Activated naive CD4-positive, alpha-beta T cell treated with anti-CD3 and anti-CD28 coated beads for 36 hours (primary cell): ENCODE measurements at regions of chr21 and their contacts with region 1.

Region 1: GRCh38 chr21:45074818-45075595 is 627 bp downstream of the ADARB1 start:
- DNase-seq: peak; percentile 34
- H3K4me3 Mint-ChIP-seq: peak overlapping the region; percentile 84
- H3K27ac Mint-ChIP-seq: peak overlapping the region; percentile 76
- H3K4me1 Mint-ChIP-seq: peaks cover 45% of the 10 kb centered on the region
- H3K27me3 Mint-ChIP-seq: no peaks in the 10 kb centered on the region

Region 2: DNA sequence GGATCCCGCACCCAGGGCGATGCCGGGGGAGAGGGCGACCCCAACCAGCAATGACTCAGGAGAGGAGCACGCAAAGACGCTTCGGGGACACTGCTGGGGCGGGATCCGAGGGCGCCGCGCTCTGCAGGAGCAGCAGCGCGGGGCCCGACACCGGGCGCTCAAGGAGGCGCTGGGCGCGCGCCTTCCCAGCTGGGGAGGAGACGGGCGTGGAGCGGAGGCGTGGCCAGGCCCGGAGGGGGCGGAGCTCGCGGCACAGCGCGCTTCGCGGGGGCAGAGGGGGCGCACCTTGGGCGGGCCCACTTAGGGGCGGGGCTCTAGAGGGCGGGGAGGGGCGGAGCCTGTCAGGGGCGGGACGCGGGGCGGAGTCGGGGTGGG is 257.5 kb before region 1 on chr21:
- CTCF ChIA-PET with region 1: no interaction called
- intact Hi-C with region 1: loop called (anchors 5 kb)
- DNase-seq: peak; percentile 95
- H3K4me3 Mint-ChIP-seq: peak overlapping the region; percentile 65
- H3K27ac Mint-ChIP-seq: no peak overlapping the region
- H3K4me1 Mint-ChIP-seq: peaks cover 15% of the 10 kb centered on the region
- H3K27me3 Mint-ChIP-seq: no peaks in the 10 kb centered on the region

Region 3: GRCh38 chr21:44892536-44893277 is 182.3 kb before region 1 on chr21:
- CTCF ChIA-PET with region 1: no interaction called
- intact Hi-C with region 1: no loop called
- DNase-seq: peak; percentile 85
- H3K4me3 Mint-ChIP-seq: no peak overlapping the region
- H3K27ac Mint-ChIP-seq: peak overlapping the region; percentile 75
- H3K4me1 Mint-ChIP-seq: peaks cover 7% of the 10 kb centered on the region
- H3K27me3 Mint-ChIP-seq: no peaks in the 10 kb centered on the region

Region 4: GRCh38 chr21:44939532-44940115 is 135.4 kb before region 1 on chr21 and contains the start of gene SLX9:
- CTCF ChIA-PET with region 1: no interaction called
- intact Hi-C with region 1: loop called (anchors 5 kb)
- DNase-seq: peak; percentile 83
- H3K4me3 Mint-ChIP-seq: peak within 1 kb of the TSS; percentile 80
- H3K27ac Mint-ChIP-seq: peak within 1 kb of the TSS; percentile 86
- H3K4me1 Mint-ChIP-seq: peaks cover 39% of the 10 kb centered on the region
- H3K27me3 Mint-ChIP-seq: no peaks in the 10 kb centered on the region
- total RNA-seq, gene SLX9: 61.8 to 63.4 TPM

Region 5: DNA sequence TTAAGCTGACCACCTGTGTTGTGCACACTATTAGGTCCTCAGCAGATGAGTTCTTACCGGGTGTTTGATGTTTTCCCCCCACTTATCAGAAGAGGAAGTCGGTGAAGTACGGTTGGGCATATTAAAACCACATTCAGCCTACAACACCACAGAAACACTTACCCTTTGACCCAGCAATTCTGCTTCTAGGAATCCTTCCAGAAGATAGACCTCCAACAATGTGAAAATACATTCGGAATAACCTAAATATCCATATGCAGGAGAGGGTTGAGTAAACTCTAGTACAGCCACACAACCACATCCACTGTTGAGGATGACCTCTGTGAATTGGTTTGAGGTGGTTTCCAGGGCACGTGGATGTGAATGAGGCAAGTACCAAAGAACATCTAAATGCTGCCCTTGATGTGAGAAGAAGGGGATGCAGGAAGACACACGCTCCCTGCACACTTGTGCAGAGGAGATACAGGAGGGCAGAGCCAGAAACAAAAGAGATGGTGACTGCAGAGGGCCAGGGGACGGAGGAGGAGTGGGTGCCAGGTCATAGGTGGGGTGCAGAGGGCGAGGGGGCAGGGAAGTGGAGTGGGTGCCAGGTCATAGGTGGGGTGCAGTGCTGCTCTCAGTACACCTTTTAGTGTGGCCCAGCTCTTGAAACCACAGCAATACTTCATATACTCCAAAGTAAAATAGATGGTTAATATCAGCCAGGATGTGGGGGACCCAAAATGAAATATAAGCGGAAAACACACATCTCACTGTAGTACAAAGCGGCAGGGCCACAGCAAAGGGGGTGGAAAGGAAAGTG is 12.2 kb after region 1 on chr21:
- CTCF ChIA-PET with region 1: interaction called, 5 read pairs
- intact Hi-C with region 1: loop called (anchors 1 kb)
- DNase-seq: peak; percentile 37
- H3K4me3 Mint-ChIP-seq: peak overlapping the region; percentile 5
- H3K27ac Mint-ChIP-seq: peak overlapping the region; percentile 2
- H3K4me1 Mint-ChIP-seq: peaks cover 76% of the 10 kb centered on the region
- H3K27me3 Mint-ChIP-seq: no peaks in the 10 kb centered on the region

Region 6: DNA sequence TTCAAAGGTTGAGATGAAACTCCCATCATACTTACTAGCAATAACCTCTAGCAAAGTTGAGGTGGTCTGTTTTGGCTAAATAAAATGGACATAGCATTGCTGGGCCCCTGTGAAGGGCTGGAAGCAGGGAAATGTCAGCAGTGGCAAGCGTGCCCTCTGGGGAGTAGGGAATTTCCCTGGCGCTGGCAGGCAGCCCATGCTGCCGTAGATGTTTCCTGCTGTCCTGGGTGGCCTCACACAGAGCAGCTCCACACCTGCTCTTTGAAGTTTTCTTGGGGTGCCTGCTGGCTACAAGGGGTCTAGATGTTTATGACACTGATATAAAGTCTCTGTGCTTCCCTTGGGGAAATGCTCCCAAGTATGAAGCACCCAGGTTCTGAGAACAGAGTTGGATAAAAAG is 29.6 kb after region 1 on chr21:
- CTCF ChIA-PET with region 1: interaction called, 8 read pairs
- intact Hi-C with region 1: loop called (anchors 1 kb)
- DNase-seq: peak; percentile 74
- H3K4me3 Mint-ChIP-seq: peak overlapping the region; percentile 13
- H3K27ac Mint-ChIP-seq: peak overlapping the region; percentile 70
- H3K4me1 Mint-ChIP-seq: peaks cover 61% of the 10 kb centered on the region
- H3K27me3 Mint-ChIP-seq: no peaks in the 10 kb centered on the region

Region 7: DNA sequence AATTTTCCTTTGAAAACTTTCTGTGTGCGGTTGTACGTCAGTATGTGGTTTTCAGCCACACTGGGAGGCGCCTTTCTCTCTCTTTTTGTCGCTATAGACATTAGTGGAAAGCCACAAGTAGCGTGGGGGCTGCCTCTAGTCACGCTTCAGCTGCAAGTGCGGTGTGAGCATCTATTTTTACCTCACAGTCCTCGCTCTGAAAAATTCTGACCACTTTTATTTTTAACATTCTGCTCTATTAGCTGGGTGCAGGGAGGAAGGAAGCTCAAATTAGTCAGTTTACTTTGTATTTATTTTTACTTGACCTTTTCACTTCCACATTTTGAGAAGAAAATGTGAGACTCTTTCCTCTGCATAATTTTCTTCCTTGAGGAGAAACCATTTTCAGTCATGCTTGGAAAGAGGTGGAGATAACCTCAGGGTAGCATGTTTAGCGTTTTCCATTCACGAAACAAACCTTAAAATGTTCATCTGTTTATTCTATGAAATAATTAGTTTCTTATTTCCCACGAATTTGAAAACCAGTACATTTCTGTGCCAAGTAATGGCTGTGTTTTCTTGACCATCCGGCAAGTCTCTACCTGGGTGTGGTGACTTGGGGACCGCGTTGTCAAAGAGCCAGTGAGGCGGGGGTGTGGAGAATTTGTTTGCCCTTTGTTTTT is 35.0 kb after region 1 on chr21:
- CTCF ChIA-PET with region 1: interaction called, 8 read pairs
- intact Hi-C with region 1: loop called (anchors 1 kb)
- DNase-seq: peak; percentile 72
- H3K4me3 Mint-ChIP-seq: peak overlapping the region; percentile 54
- H3K27ac Mint-ChIP-seq: peak overlapping the region; percentile 78
- H3K4me1 Mint-ChIP-seq: peaks cover 68% of the 10 kb centered on the region
- H3K27me3 Mint-ChIP-seq: no peaks in the 10 kb centered on the region

Region 8: GRCh38 chr21:45130324-45130774 is 55.3 kb after region 1 on chr21:
- CTCF ChIA-PET with region 1: interaction called, 40 read pairs
- intact Hi-C with region 1: loop called (anchors 1 kb)
- DNase-seq: no peak
- H3K4me3 Mint-ChIP-seq: no peak overlapping the region
- H3K27ac Mint-ChIP-seq: no peak overlapping the region
- H3K4me1 Mint-ChIP-seq: peaks cover 32% of the 10 kb centered on the region
- H3K27me3 Mint-ChIP-seq: no peaks in the 10 kb centered on the region